KBM-7 (cell line): ENCODE measurements at regions of chr3 and their contacts with region 1.

Region 1: DNA sequence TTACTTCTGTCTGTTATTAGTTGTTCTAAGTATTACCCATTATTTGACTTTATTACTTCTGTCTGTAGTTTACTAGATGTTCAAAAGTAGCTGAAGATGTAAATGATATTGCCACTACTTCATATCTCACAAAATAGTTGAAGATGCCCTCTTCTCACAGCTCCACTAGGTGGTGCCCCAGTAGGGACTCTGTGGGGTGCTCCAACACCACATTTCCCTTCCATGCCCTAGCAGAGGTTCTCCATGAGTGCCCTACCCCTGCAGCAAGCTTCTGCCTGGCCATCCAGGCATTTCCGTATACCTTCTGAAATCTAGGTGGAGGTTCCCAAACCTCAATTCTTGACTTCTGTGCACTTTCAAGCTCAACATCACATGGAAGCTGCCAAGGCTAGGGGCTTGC is 80.8 kb downstream of the KCNH8 start:
- DNase-seq: peak; percentile 18

Region 2: GRCh38 chr3:18787441-18787840 is 441.6 kb before region 1 on chr3:
- in situ Hi-C with region 1: no loop called
- DNase-seq: peak; percentile 54

Region 3: DNA sequence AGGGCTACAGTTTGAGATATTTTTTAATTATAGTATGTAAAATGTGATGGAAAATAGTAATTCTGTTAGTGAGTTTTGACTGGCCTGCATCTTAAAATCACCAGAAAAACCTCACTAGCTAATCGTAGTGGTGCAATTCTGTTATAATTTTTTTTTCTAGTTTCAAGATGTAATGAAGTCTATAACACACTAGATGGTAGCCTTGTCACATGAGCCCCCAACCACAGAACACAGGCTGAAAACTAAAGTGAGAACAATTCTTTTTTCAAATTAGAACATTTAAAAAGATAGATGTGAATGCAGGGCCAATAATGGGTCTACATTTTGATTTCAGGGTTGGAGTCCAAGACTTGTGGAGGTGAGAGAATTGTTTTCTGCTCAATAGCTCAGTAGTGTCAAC is 164.1 kb before region 1 on chr3:
- in situ Hi-C with region 1: loop called (anchors 25 kb)
- DNase-seq: peak; percentile 32